ENCODE measurements at regions of chr14 and their contacts with region 1.

Region 1: DNA sequence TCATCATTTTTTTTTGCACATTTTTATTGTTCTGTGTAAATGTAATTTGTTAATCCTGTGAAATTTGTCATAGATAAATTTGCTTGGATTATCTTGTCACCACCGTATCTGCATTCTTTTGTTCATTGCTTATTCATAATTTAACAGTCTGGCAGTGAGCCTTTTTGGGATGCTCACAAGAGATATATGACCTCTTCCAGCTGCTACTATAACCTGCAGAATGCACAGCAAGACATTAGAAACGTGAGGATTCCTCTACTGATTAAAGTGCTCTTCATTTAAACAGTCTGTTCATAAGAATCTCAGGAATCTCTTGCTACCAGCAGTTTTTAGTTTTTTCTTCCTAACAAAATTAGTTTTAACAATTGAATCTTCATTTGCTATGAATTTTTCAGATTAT is 9.1 kb downstream of the NPAS3 start:
- DNase-seq: peak; percentile 90
- H3K4me3 ChIP-seq: no peak overlapping the region
- H3K27ac ChIP-seq: peak overlapping the region; percentile 76
- H3K4me1 ChIP-seq: peaks cover 81% of the 10 kb centered on the region
- H3K27me3 ChIP-seq: no peaks in the 10 kb centered on the region
- CTCF ChIP-seq: no peak

Region 2: GRCh38 chr14:32779840-32780239 is 168.0 kb before region 1 on chr14:
- CTCF ChIA-PET with region 1: no interaction called
- POLR2A ChIA-PET with region 1: no interaction called
- intact Hi-C with region 1: no loop called
- DNase-seq: no peak
- H3K4me3 ChIP-seq: no peak overlapping the region
- H3K27ac ChIP-seq: no peak overlapping the region
- H3K4me1 ChIP-seq: no peaks in the 10 kb centered on the region
- H3K27me3 ChIP-seq: no peaks in the 10 kb centered on the region
- CTCF ChIP-seq: no peak

Region 3: GRCh38 chr14:33165144-33165925 is 217.5 kb after region 1 on chr14:
- CTCF ChIA-PET with region 1: no interaction called
- POLR2A ChIA-PET with region 1: no interaction called
- intact Hi-C with region 1: loop called (anchors 5 kb)
- DNase-seq: peak; percentile 90
- H3K4me3 ChIP-seq: no peak overlapping the region
- H3K27ac ChIP-seq: peak overlapping the region; percentile 55
- H3K4me1 ChIP-seq: peaks cover 45% of the 10 kb centered on the region
- H3K27me3 ChIP-seq: no peaks in the 10 kb centered on the region
- CTCF ChIP-seq: no peak

Measured in A673 (cell line).